HepG2 (cell line): ENCODE measurements at regions of chr16 and their contacts with region 1.

Region 1: DNA sequence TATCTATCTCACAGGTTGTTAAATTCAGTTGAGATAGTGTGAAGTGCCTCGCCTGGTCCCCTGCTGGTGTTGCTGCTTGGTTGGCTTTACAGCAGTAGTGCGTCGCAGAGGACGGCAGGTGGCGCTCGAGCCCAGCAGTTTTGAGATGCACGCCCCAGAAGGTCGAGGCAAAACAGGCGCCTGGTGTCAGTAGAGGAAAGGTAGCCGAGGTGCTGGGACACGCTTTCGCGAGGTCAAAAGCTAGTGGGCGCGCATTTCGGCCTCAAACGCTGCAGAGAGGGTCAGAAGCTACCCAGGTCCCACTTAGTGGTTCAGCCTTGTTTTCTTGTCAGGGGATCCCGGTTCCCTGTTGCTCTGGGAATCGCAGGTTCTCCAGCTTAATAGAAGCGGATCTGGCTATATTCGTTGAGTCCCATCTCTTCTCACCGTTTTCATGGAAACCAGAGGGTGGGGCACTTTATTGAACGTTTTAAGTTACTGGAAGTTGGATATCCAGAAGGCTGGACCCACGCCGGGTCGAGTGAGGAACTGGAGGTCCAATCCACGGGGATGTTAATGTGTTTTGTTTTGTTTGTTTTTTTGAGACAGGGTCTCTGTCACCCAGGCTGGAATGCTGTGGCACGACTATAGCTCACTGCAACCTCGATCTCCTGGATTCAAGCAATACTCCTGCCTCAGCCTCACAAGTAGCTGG is 10.3 kb upstream of the ZFP90 start:
- DNase-seq: peak; percentile 85
- ATAC-seq: peak; percentile 79
- H3K4me3 ChIP-seq: peak overlapping the region in 2 of 3 experiments; percentile 2 to 86; a peak in 2 of 6 replicates
- H3K27ac ChIP-seq: peak overlapping the region; percentile 5
- H3K4me1 ChIP-seq: peaks cover 52% of the 10 kb centered on the region
- H3K27me3 ChIP-seq: no peaks in the 10 kb centered on the region
- CTCF ChIP-seq: peak; percentile 99
- EP300 ChIP-seq: no peak
- POLR2A ChIP-seq: peak in 1 of 2 experiments; percentile 22; a peak in 1 of 4 replicates
- RAD21 ChIP-seq: peak; percentile 98

Region 2: DNA sequence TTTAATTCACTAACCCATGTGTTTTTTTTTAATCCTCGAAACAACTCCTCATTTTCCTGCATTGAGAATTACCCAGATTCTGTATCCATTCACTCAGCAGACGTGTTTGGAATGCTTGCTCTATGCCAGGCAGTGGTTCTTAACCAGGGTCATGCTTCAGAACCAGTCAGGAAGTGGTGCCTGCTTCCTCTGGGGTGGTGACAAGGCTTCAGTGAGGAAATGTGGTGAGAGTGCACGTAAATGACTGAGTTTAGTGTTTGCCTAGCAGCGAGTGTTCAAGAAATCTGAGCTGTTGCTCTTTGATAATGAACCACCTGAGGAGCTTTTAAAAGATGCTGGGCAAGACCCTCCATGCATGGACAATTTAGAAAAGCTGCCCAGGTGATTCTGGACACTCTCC is 20.1 kb after region 1 on chr16:
- CTCF ChIA-PET with region 1: no interaction called
- POLR2A ChIA-PET with region 1: no interaction called
- in situ Hi-C with region 1: no loop called
- intact Hi-C with region 1: no loop called
- DNase-seq: no peak
- ATAC-seq: no peak
- H3K4me3 ChIP-seq: no peak overlapping the region
- H3K27ac ChIP-seq: no peak overlapping the region
- H3K4me1 ChIP-seq: no peaks in the 10 kb centered on the region
- H3K27me3 ChIP-seq: no peaks in the 10 kb centered on the region
- CTCF ChIP-seq: no peak
- EP300 ChIP-seq: no peak
- POLR2A ChIP-seq: no peak
- RAD21 ChIP-seq: no peak

Region 3: GRCh38 chr16:68590201-68590994 is 61.6 kb after region 1 on chr16:
- CTCF ChIA-PET with region 1: interaction called, 14 read pairs
- POLR2A ChIA-PET with region 1: interaction called, 3 read pairs
- in situ Hi-C with region 1: loop called (anchors 5 kb)
- intact Hi-C with region 1: loop called (anchors 2 kb)
- DNase-seq: peak; percentile 60
- ATAC-seq: peak; percentile 100
- H3K4me3 ChIP-seq: peak overlapping the region in 1 of 3 experiments; percentile 44; a peak in 1 of 6 replicates
- H3K27ac ChIP-seq: no peak overlapping the region
- H3K4me1 ChIP-seq: no peaks in the 10 kb centered on the region
- H3K27me3 ChIP-seq: peaks cover 0 to 3% of the 10 kb centered on the region in 2 experiments; a peak in 1 of 5 replicates
- CTCF ChIP-seq: peak; percentile 97
- EP300 ChIP-seq: no peak
- POLR2A ChIP-seq: no peak
- RAD21 ChIP-seq: peak; percentile 97

Region 4: DNA sequence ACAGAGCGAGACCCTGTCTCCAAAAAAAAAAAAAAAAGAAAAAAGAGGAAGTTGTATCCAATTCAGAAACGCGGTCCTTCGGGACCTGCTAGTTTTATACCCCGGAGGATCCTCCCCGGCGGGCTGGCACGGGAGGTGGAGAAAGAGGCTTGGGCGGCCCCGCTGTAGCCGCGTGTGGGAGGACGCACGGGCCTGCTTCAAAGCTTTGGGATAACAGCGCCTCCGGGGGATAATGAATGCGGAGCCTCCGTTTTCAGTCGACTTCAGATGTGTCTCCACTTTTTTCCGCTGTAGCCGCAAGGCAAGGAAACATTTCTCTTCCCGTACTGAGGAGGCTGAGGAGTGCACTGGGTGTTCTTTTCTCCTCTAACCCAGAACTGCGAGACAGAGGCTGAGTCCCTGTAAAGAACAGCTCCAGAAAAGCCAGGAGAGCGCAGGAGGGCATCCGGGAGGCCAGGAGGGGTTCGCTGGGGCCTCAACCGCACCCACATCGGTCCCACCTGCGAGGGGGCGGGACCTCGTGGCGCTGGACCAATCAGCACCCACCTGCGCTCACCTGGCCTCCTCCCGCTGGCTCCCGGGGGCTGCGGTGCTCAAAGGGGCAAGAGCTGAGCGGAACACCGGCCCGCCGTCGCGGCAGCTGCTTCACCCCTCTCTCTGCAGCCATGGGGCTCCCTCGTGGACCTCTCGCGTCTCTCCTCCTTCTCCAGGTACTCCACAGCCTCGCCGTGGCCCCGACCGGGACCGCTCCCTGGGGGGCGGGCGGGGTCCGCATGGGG is 116.1 kb after region 1 on chr16 and contains the start of gene CDH3:
- CTCF ChIA-PET with region 1: no interaction called
- POLR2A ChIA-PET with region 1: no interaction called
- in situ Hi-C with region 1: no loop called
- intact Hi-C with region 1: no loop called
- DNase-seq: no peak
- ATAC-seq: peak; percentile 58
- H3K4me3 ChIP-seq: peak within 1 kb of the TSS in 2 of 3 experiments; percentile 5 to 53; a peak in 2 of 6 replicates
- H3K27ac ChIP-seq: no peak within 1 kb of the TSS
- H3K4me1 ChIP-seq: peaks cover 24% of the 10 kb centered on the region
- H3K27me3 ChIP-seq: peaks cover 15 to 65% of the 10 kb centered on the region in 2 experiments
- CTCF ChIP-seq: no peak
- EP300 ChIP-seq: no peak
- POLR2A ChIP-seq: no peak
- RAD21 ChIP-seq: no peak
- total RNA-seq, gene CDH3: not detected in 2 replicates

Region 5: DNA sequence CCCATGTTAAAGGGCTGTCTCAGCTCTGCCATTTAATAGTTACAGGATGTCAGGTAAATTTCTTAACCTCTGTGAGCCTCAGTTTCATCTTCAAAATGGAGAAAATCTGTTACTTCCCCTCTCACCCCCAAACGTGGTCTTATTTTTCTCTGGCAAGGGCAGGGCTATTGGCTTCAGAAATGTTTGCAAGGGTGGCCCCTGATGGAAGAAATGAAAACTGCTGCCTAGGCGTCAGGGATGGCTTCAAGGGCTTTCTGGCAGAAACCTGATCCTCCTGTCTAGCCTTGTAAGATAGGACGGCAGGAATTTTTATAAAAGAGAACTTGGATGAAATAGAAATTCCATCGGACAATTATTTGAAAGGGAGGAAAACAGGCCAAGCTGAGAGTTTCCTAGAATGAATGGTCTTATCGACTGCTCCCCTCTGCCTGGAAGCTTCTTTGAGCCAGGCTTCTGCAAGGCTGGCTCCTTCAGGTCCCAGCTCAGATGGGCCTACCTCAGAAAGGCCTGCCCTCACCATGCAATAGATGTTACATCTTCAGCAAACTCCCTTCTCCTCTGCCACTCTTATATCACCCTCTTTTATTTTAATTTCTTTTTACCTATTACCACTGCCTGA is 271.5 kb after region 1 on chr16:
- CTCF ChIA-PET with region 1: interaction called, 3 read pairs
- POLR2A ChIA-PET with region 1: no interaction called
- in situ Hi-C with region 1: no loop called
- intact Hi-C with region 1: loop called (anchors 1 kb)
- DNase-seq: peak; percentile 77
- ATAC-seq: peak; percentile 95
- H3K4me3 ChIP-seq: no peak overlapping the region
- H3K27ac ChIP-seq: no peak overlapping the region
- H3K4me1 ChIP-seq: peaks cover 21% of the 10 kb centered on the region
- H3K27me3 ChIP-seq: no peaks in the 10 kb centered on the region
- CTCF ChIP-seq: peak; percentile 94
- EP300 ChIP-seq: no peak
- POLR2A ChIP-seq: no peak
- RAD21 ChIP-seq: peak; percentile 96

Region 6: GRCh38 chr16:68951991-68952877 is 423.4 kb after region 1 on chr16:
- CTCF ChIA-PET with region 1: no interaction called
- POLR2A ChIA-PET with region 1: no interaction called
- in situ Hi-C with region 1: no loop called
- intact Hi-C with region 1: no loop called
- DNase-seq: no peak
- ATAC-seq: no peak
- H3K4me3 ChIP-seq: no peak overlapping the region
- H3K27ac ChIP-seq: no peak overlapping the region
- H3K4me1 ChIP-seq: no peaks in the 10 kb centered on the region
- H3K27me3 ChIP-seq: no peaks in the 10 kb centered on the region
- CTCF ChIP-seq: no peak
- EP300 ChIP-seq: no peak
- POLR2A ChIP-seq: no peak
- RAD21 ChIP-seq: no peak

Region 7: DNA sequence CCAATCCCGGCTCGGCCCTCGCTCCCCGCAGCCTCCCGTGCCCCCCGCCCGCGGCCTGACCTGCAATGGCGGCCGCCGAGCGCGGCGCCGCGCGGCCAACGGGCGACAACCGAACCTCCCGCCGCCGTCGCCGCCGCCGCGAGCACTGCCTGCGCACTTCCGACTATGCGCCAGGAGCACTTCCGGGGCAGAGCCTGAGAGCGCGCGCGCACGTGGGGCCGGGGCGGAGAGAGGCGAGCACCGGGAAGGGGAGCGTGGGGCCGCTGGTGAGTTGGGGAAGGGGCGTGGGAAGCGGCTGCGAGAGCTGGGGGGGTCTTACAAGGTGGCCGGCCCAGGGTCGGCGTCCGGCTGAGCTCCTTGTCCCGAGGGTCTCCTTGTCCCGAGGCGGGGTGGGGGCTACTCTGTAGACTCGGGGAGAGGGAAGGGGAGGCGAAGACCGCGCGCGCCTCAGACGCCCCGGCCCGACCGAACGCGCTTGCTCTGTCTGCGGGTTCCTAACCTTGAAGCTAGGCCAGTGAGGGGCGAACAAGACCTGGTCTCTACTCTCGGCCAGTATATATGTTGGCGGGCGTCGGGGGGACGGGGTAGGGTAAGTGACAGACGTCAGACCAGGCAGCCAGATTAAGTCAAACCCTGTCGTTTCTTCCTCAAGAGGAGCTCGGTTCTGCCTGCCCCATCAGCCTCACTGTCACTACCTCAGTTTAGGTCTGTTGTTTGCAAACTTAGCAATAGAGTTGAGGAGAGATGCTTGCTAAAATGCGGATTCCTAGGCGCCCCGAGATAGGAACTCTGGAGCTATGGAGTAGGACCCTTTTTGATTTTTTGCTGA is 603.8 kb after region 1 on chr16 and contains the starts of genes CHTF8 and UTP4:
- CTCF ChIA-PET with region 1: no interaction called
- POLR2A ChIA-PET with region 1: no interaction called
- in situ Hi-C with region 1: no loop called
- intact Hi-C with region 1: loop called (anchors 10 kb)
- DNase-seq: peak; percentile 79
- ATAC-seq: peak; percentile 95
- H3K4me3 ChIP-seq: peak within 1 kb of the TSS; percentile 87 to 98 (median 91)
- H3K27ac ChIP-seq: peak within 1 kb of the TSS; percentile 97
- H3K4me1 ChIP-seq: peaks cover 50% of the 10 kb centered on the region
- H3K27me3 ChIP-seq: no peaks in the 10 kb centered on the region; a peak in 1 of 5 replicates
- CTCF ChIP-seq: no peak; the same call in 1 of the 2 replicates
- EP300 ChIP-seq: no peak; a peak in 2 of 4 replicates
- POLR2A ChIP-seq: peak in 1 of 2 experiments; percentile 94; a peak in 3 of 4 replicates
- RAD21 ChIP-seq: no peak; the same call in 1 of the 2 replicates
- total RNA-seq, gene CHTF8: 37.2 and 64.1 TPM in 2 replicates
- total RNA-seq, gene UTP4: 30.0 and 57.1 TPM in 2 replicates